Activated naive CD4-positive, alpha-beta T cell treated with anti-CD3 and anti-CD28 coated beads for 36 hours (primary cell): ENCODE measurements at regions of chr5 and their contacts with region 1.

Region 1: GRCh38 chr5:133868946-133869518 is 99.4 kb downstream of the C5orf15 start:
- DNase-seq: peak; percentile 93
- H3K4me3 Mint-ChIP-seq: no peak overlapping the region
- H3K27ac Mint-ChIP-seq: peak overlapping the region; percentile 44
- H3K4me1 Mint-ChIP-seq: peaks cover 40% of the 10 kb centered on the region
- H3K27me3 Mint-ChIP-seq: no peaks in the 10 kb centered on the region

Region 2: GRCh38 chr5:133398646-133399101 is 470.4 kb before region 1 on chr5:
- CTCF ChIA-PET with region 1: no interaction called
- intact Hi-C with region 1: loop called (anchors 5 kb)
- DNase-seq: peak; percentile 73
- H3K4me3 Mint-ChIP-seq: no peak overlapping the region
- H3K27ac Mint-ChIP-seq: no peak overlapping the region
- H3K4me1 Mint-ChIP-seq: peaks cover 37% of the 10 kb centered on the region
- H3K27me3 Mint-ChIP-seq: no peaks in the 10 kb centered on the region

Region 3: GRCh38 chr5:133552931-133553525 is 316.0 kb before region 1 on chr5:
- CTCF ChIA-PET with region 1: interaction called, 14 read pairs
- intact Hi-C with region 1: loop called (anchors 1 kb)
- DNase-seq: peak; percentile 79
- H3K4me3 Mint-ChIP-seq: no peak overlapping the region
- H3K27ac Mint-ChIP-seq: no peak overlapping the region
- H3K4me1 Mint-ChIP-seq: no peaks in the 10 kb centered on the region
- H3K27me3 Mint-ChIP-seq: peaks cover 18% of the 10 kb centered on the region

Region 4: DNA sequence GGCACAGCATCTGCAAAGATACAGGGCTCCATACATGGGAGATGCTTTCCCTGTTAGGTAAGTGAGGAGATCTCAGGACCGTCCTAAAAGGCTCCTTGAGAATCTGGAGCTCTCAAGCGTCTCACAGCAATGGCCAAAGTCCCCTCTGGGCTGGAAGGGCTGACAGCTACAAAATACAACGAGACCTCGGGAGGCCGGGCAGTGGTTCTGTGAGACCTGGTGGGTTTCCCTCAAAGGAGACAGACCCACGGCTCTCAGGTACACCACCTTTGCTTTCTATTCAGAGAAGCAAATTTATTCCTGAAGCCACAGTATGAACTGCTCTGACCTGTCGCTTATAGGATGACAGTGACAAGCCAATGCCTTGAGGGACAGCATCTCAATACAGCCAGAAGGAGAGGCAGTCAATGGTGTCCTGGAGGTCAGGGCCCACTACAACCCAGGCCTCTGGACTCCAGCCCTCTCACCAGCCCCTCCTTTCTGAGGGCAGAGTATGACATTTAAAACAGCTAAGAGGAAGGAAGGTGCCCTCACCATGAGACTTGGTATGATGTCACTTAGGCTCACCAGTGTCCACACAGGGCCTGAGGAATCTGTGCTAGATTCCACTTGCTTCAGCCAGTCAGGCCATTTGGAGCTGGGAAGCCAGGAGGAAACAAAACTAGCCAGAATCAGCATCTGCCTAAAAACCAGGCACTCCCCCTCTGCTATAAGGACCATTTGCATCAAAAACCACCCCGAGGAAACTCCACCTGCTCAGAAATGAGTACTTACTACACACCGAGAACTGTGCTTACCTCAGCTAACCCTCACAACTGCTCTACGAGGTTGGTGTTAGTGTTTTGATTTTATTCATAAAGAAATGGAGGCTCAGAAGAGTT is 170.1 kb before region 1 on chr5:
- CTCF ChIA-PET with region 1: interaction called, 3 read pairs
- intact Hi-C with region 1: loop called (anchors 1 kb)
- DNase-seq: peak; percentile 73
- H3K4me3 Mint-ChIP-seq: no peak overlapping the region
- H3K27ac Mint-ChIP-seq: peak overlapping the region; percentile 59
- H3K4me1 Mint-ChIP-seq: peaks cover 15% of the 10 kb centered on the region
- H3K27me3 Mint-ChIP-seq: peaks cover 5% of the 10 kb centered on the region

Region 5: GRCh38 chr5:133884569-133885311 is 15.7 kb after region 1 on chr5:
- CTCF ChIA-PET with region 1: interaction called, 24 read pairs
- intact Hi-C with region 1: no loop called
- DNase-seq: no peak
- H3K4me3 Mint-ChIP-seq: no peak overlapping the region
- H3K27ac Mint-ChIP-seq: no peak overlapping the region
- H3K4me1 Mint-ChIP-seq: no peaks in the 10 kb centered on the region
- H3K27me3 Mint-ChIP-seq: peaks cover 2% of the 10 kb centered on the region

Region 6: GRCh38 chr5:133968049-133968980 is 99.3 kb after region 1 on chr5 and contains the start of gene C5orf15:
- CTCF ChIA-PET with region 1: no interaction called
- intact Hi-C with region 1: loop called (anchors 1 kb)
- DNase-seq: peak; percentile 96
- H3K4me3 Mint-ChIP-seq: peak within 1 kb of the TSS; percentile 96
- H3K27ac Mint-ChIP-seq: peak within 1 kb of the TSS; percentile 93
- H3K4me1 Mint-ChIP-seq: peaks cover 46% of the 10 kb centered on the region
- H3K27me3 Mint-ChIP-seq: no peaks in the 10 kb centered on the region
- total RNA-seq, gene C5orf15: 18.1 to 18.6 TPM

Region 7: DNA sequence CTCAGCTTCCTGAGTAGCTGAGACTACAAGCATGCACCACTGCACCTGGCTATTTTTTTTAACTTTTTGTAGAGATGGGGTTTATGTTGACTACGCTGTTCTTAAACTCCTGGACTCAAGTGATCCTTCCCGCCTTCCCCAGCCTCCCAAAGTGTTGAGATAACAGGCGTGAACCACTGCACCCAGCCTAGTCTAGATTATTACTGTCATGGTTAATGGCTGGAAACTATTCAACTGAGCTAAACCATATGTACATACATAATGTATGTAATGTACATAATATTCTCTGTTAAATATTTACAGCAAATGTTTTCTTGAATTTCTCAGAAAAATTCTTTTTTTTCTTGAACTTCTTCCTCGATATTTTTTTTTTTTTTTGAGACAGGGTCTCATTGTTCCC is 335.5 kb after region 1 on chr5:
- CTCF ChIA-PET with region 1: no interaction called
- intact Hi-C with region 1: no loop called
- DNase-seq: no peak
- H3K4me3 Mint-ChIP-seq: no peak overlapping the region
- H3K27ac Mint-ChIP-seq: no peak overlapping the region
- H3K4me1 Mint-ChIP-seq: peaks cover 19% of the 10 kb centered on the region
- H3K27me3 Mint-ChIP-seq: no peaks in the 10 kb centered on the region